ENCODE measurements at regions of chr11 and their contacts with region 1.

Region 1: DNA sequence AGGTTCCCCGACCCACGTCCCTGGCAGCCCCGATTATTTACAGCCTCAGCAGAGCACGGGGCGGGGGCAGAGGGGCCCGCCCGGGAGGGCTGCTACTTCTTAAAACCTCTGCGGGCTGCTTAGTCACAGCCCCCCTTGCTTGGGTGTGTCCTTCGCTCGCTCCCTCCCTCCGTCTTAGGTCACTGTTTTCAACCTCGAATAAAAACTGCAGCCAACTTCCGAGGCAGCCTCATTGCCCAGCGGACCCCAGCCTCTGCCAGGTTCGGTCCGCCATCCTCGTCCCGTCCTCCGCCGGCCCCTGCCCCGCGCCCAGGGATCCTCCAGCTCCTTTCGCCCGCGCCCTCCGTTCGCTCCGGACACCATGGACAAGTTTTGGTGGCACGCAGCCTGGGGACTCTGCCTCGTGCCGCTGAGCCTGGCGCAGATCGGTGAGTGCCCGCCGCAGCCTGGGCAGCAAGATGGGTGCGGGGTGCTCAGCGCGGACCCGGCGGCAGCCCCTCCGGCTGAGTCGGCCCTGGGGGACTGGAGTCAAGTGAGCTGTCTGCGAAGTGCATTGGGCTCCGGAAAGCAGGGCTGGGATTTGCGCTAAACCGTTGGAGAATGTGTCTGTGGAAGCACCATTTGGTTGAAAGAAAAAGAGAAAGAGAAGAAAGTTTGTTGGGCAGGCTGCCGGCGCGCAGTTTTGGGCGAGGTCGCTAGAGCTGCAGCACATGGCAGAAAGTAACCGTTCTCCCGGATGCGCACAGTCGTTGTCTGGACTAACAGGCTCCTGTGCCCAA is at the start of gene CD44:
- DNase-seq: peak; percentile 55 to 65
- ATAC-seq: peak; percentile 77 to 83 (median 81)
- H3K4me3 ChIP-seq: peak within 1 kb of the TSS; percentile 54 to 94 (median 76)
- H3K27ac ChIP-seq: peak within 1 kb of the TSS; percentile 17 to 98 (median 84)
- H3K4me1 ChIP-seq: peaks cover 0 to 58% (median 13%) of the 10 kb centered on the region in 9 donors
- H3K27me3 ChIP-seq: no peaks in the 10 kb centered on the region
- CTCF ChIP-seq: no peak
- total RNA-seq, gene CD44: 18.9 to 104 (median 27.1) TPM

Region 2: GRCh38 chr11:35082321-35083182 is 56.6 kb before region 1 on chr11:
- intact Hi-C with region 1: loop called in 2 of 10 experiments (anchors 10 kb)
- DNase-seq: peak; percentile 46 to 53
- ATAC-seq: peak; percentile 62 to 77 (median 70)
- H3K4me3 ChIP-seq: peak overlapping the region in 1 of 10 donors; percentile 14
- H3K27ac ChIP-seq: peak overlapping the region in 6 of 10 donors; percentile 15 to 83 (median 34)
- H3K4me1 ChIP-seq: peaks cover 0 to 75% (median 48%) of the 10 kb centered on the region in 9 donors
- H3K27me3 ChIP-seq: no peaks in the 10 kb centered on the region
- CTCF ChIP-seq: no peak

Measured in heart right ventricle (tissue), 16 donors.